MCF 10A (cell line): ENCODE measurements at regions of chr9 and their contacts with region 1.

Region 1: GRCh38 chr9:121686930-121687541 is 35.6 kb downstream of the DAB2IP start:
- DNase-seq: peak; percentile 70
- H3K4me3 Mint-ChIP-seq: no peak overlapping the region
- H3K27ac Mint-ChIP-seq: no peak overlapping the region
- H3K4me1 Mint-ChIP-seq: peaks cover 2% of the 10 kb centered on the region
- H3K27me3 Mint-ChIP-seq: no peaks in the 10 kb centered on the region
- CTCF ChIP-seq: peak; percentile 92

Region 2: DNA sequence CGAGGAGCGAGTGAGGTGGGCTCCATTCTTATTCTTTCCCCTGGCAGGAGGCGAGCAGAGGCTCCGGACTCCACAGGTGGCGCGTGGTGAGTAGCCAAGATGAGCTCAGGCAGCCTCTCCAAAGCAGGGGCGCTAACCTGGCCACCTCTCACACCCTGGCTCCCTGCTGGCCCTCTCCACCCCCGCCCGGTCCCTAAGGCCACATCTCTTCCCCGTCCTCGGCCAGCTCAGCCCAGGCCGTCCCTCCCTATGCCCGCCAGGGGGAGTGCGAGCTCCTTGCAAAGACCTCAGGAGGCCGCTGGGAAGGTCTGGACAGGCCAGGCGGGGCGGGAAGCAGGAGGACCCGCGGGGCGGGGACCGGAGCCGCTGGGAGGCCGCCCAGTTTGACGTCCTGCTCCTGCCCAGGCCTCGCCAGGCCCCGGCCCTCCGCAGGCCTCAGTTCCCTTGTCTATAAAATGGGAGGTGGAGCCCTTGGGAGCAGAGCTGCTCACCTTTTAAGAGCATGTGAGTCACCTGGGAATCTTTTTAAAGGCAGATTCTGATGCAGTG is 141.1 kb before region 1 on chr9:
- CTCF ChIA-PET with region 1: interaction called, 45 read pairs
- POLR2A ChIA-PET with region 1: interaction called, 5 read pairs
- intact Hi-C with region 1: loop called (anchors 2 kb)
- DNase-seq: peak; percentile 97
- H3K4me3 Mint-ChIP-seq: peak overlapping the region; percentile 33
- H3K27ac Mint-ChIP-seq: peak overlapping the region; percentile 19
- H3K4me1 Mint-ChIP-seq: no peaks in the 10 kb centered on the region
- H3K27me3 Mint-ChIP-seq: no peaks in the 10 kb centered on the region
- CTCF ChIP-seq: peak; percentile 96

Region 3: GRCh38 chr9:121698627-121699570 is 11.9 kb after region 1 on chr9:
- CTCF ChIA-PET with region 1: interaction called, 43 read pairs
- POLR2A ChIA-PET with region 1: interaction called, 3 read pairs
- intact Hi-C with region 1: no loop called
- DNase-seq: peak; percentile 47
- H3K4me3 Mint-ChIP-seq: peak overlapping the region; percentile 75
- H3K27ac Mint-ChIP-seq: no peak overlapping the region
- H3K4me1 Mint-ChIP-seq: peaks cover 20% of the 10 kb centered on the region
- H3K27me3 Mint-ChIP-seq: no peaks in the 10 kb centered on the region
- CTCF ChIP-seq: no peak

Region 4: DNA sequence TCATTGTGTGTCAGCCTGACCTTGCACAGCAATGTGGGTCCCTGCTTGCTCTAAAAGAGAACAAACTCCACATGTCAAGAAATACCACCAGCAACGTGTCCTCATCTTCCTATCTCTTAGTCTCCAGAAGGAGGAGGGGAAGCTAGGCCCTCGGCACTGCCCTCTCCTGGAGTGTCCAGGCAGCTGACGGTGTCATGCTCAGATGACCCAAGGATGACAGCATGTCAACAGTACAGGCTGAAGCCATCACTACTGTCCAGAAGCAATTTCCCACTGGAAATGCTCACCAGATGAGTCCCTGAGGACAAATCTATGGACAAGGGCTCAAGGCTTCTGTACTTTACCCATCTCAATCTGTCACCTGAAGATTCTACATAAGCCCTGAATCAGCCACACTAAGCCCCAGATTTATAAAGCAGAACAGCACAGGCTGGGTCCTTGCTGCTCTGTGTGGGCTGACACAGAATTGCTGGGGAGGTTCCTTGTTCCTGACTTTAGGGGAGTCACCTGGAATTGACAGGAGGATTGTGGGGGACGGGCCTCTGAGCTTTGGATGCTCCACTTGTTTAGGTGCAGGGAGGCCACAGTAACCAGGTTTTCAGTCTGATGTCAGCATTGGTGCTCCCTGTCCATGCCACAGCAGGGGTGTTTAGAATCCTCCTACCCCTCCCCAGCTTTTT is 174.6 kb after region 1 on chr9:
- CTCF ChIA-PET with region 1: interaction called, 3 read pairs
- POLR2A ChIA-PET with region 1: no interaction called
- intact Hi-C with region 1: loop called (anchors 2 kb)
- DNase-seq: peak; percentile 44
- H3K4me3 Mint-ChIP-seq: no peak overlapping the region
- H3K27ac Mint-ChIP-seq: no peak overlapping the region
- H3K4me1 Mint-ChIP-seq: no peaks in the 10 kb centered on the region
- H3K27me3 Mint-ChIP-seq: no peaks in the 10 kb centered on the region
- CTCF ChIP-seq: peak; percentile 29

Region 5: GRCh38 chr9:121997791-121998190 is 310.8 kb after region 1 on chr9:
- CTCF ChIA-PET with region 1: interaction called, 29 read pairs
- POLR2A ChIA-PET with region 1: no interaction called
- intact Hi-C with region 1: loop called (anchors 1 kb)
- DNase-seq: no peak
- H3K4me3 Mint-ChIP-seq: no peak overlapping the region
- H3K27ac Mint-ChIP-seq: no peak overlapping the region
- H3K4me1 Mint-ChIP-seq: peaks cover 4% of the 10 kb centered on the region
- H3K27me3 Mint-ChIP-seq: no peaks in the 10 kb centered on the region
- CTCF ChIP-seq: no peak

Region 6: GRCh38 chr9:122116040-122116439 is 429.0 kb after region 1 on chr9:
- CTCF ChIA-PET with region 1: interaction called, 12 read pairs
- POLR2A ChIA-PET with region 1: no interaction called
- intact Hi-C with region 1: loop called (anchors 10 kb)
- DNase-seq: no peak
- H3K4me3 Mint-ChIP-seq: no peak overlapping the region
- H3K27ac Mint-ChIP-seq: no peak overlapping the region
- H3K4me1 Mint-ChIP-seq: peaks cover 5% of the 10 kb centered on the region
- H3K27me3 Mint-ChIP-seq: peaks cover 35% of the 10 kb centered on the region
- CTCF ChIP-seq: no peak